ENCODE measurements at regions of chr17 and their contacts with region 1.

Region 1: DNA sequence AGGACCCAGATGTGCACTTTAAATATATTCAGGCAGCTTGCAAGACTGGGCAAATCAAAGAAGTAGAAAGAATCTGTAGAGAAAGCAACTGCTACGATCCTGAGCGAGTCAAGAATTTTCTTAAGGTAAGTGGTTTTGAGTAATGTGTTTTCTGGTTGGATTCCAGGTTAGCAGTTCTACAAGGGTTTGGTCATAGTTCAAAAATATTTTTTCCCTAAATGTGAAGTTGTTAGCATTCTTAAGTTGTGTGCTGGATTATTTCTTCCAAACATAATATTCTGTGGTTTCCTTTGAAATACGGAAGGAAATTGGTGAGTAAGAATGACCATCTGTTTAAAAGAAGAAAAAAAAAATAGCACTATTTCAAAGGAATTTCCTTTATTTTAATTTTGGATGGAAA is 38.4 kb downstream of the PTRH2 start:
- DNase-seq: no peak
- ATAC-seq: no peak
- H3K4me3 Mint-ChIP-seq: no peak overlapping the region
- H3K27ac Mint-ChIP-seq: peak overlapping the region; percentile 57
- H3K4me1 Mint-ChIP-seq: peaks cover 31% of the 10 kb centered on the region
- H3K27me3 Mint-ChIP-seq: no peaks in the 10 kb centered on the region
- CTCF ChIP-seq: no peak

Region 2: DNA sequence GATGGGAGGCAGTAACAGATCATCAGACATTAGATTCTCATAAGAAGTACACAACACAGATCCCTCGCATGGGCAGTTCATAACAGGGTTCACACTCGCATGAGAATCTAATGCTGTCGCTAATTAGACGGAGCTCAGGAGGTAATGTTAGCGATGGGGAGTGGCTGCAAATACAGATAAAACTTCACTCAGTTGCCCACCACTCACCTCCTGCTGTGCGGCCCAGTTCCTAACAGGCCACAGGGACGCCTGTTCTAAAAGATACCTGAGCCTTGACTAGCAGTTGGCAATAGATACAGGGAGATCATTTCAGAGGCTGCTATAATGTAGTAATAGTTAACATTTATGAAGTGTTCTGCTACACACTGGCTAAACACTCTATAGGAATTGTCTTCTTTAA is 33.5 kb after region 1 on chr17:
- CTCF ChIA-PET with region 1: interaction called, 3 read pairs
- POLR2A ChIA-PET with region 1: interaction called, 3 read pairs
- intact Hi-C with region 1: loop called (anchors 5 kb)
- DNase-seq: no peak
- ATAC-seq: no peak
- H3K4me3 Mint-ChIP-seq: no peak overlapping the region
- H3K27ac Mint-ChIP-seq: no peak overlapping the region
- H3K4me1 Mint-ChIP-seq: peaks cover 67% of the 10 kb centered on the region
- H3K27me3 Mint-ChIP-seq: no peaks in the 10 kb centered on the region
- CTCF ChIP-seq: no peak

Region 3: GRCh38 chr17:59725691-59726090 is 56.9 kb after region 1 on chr17:
- CTCF ChIA-PET with region 1: no interaction called
- POLR2A ChIA-PET with region 1: no interaction called
- intact Hi-C with region 1: no loop called
- DNase-seq: no peak
- ATAC-seq: no peak
- H3K4me3 Mint-ChIP-seq: no peak overlapping the region
- H3K27ac Mint-ChIP-seq: no peak overlapping the region
- H3K4me1 Mint-ChIP-seq: peaks cover 17% of the 10 kb centered on the region
- H3K27me3 Mint-ChIP-seq: no peaks in the 10 kb centered on the region
- CTCF ChIP-seq: no peak

Measured in activated CD8-positive, alpha-beta T cell treated with anti-CD3 and anti-CD28 coated beads for 36 hours (primary cell).